Heart left ventricle (tissue), 16 donors: ENCODE measurements at regions of chr20 and their contacts with region 1.

Region 1: GRCh38 chr20:19376451-19377229 is 164.2 kb downstream of the SLC24A3 start:
- DNase-seq: peak in 1 of 5 donors; percentile 41
- ATAC-seq: peak; percentile 56 to 88 (median 86)
- H3K4me3 ChIP-seq: peak overlapping the region in 6 of 12 donors; percentile 7 to 45 (median 22)
- H3K27ac ChIP-seq: peak overlapping the region in 1 of 12 donors; percentile 15
- H3K4me1 ChIP-seq: peaks cover 0 to 9% (median 0%) of the 10 kb centered on the region in 12 donors
- H3K27me3 ChIP-seq: no peaks in the 10 kb centered on the region
- CTCF ChIP-seq: no peak
- POLR2A ChIP-seq: no peak

Region 2: DNA sequence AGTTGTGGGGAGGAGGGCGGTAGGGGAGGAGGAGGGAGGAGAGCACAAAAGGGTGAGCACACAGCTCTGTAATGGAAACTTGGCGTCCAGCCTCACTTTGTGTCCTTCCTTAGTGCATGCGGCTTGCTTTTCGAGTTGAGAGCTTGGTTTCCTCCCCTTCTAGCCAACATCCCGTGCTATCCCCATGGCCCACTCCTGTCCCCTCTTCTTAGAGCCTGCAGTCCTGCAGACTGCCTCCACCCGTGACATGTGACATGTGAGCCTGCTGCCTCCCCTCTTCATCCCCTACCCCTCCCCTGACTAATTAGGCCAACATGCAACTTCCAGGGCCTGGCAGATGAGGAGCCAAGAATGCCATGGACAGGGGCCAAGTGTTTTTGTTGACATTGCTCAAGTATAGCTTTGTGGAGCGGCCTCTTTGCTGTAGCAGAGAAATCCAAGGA is 101.0 kb before region 1 on chr20:
- intact Hi-C with region 1: loop called in 1 of 10 experiments (anchors 10 kb)
- DNase-seq: peak in 4 of 5 donors; percentile 79 to 85 (median 82)
- ATAC-seq: peak; percentile 91 to 96 (median 94)
- H3K4me3 ChIP-seq: no peak overlapping the region
- H3K27ac ChIP-seq: peak overlapping the region in 9 of 12 donors; percentile 26 to 77 (median 48)
- H3K4me1 ChIP-seq: peaks cover 0 to 22% (median 15%) of the 10 kb centered on the region in 12 donors
- H3K27me3 ChIP-seq: no peaks in the 10 kb centered on the region
- CTCF ChIP-seq: no peak
- POLR2A ChIP-seq: no peak